HepG2 (cell line): ENCODE measurements at regions of chr17 and their contacts with region 1.

Region 1: DNA sequence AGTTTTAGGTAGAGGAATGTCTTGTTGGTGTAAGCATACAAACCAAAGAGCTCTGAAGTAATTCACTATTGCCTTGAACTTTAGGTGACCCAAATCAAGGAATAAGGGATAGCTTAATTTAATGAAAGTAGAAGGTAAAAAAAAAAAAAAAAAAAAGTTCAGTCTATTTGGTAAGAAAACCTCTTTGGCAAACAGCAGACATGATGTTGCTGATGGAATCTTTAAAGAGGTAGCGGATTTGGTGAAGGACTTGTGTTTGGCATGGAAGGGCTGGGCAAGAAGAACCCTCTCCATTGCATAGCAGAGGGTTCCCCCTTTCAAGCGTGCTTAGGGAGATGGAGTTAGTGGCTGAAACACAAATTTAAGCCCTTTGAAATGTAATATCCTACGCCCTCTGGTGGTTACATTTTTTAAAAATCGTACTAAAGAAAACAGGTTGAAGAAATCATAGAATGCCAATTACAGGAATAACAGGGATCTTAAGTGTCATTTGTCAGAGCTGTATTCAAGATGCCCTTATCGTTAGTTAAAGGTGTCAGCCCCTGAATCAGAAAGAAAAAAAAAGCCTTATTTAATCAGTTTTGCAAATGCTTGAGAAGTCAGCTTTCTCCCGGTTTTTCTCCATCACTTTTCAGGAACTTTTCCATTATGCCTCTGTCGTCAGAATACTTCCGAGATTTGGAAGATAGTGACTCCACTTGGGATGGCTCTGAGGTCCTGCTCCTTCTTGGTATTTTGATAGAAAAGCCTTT is 383.1 kb downstream of the KCNJ2 start:
- DNase-seq: peak; percentile 15
- ATAC-seq: peak; percentile 41; the same call in 1 of the 3 replicates
- H3K4me3 ChIP-seq: no peak overlapping the region
- H3K27ac ChIP-seq: no peak overlapping the region
- H3K4me1 ChIP-seq: no peaks in the 10 kb centered on the region
- H3K27me3 ChIP-seq: no peaks in the 10 kb centered on the region
- CTCF ChIP-seq: peak; percentile 56
- EP300 ChIP-seq: no peak
- POLR2A ChIP-seq: no peak
- RAD21 ChIP-seq: no peak; the same call in 1 of the 2 replicates

Region 2: DNA sequence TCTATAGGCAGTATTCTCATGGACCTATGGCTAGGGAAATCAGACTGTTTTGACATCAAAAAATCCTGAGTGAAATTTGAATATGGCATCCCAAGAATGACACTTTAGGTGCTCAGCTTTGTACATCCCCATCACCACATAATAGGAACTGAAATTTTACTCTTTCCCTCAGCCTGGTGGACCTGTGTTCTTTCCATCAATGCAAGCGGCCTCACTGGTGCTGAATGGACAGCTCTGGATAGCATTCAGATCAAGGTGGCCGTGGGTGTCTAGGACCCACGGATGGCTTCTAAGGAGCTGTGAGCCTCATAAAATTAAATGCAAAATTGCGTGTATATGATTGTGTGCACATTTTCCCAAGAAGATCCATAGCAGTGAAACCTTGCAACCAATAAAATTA is 985.3 kb before region 1 on chr17:
- CTCF ChIA-PET with region 1: interaction called, 14 read pairs
- POLR2A ChIA-PET with region 1: no interaction called
- in situ Hi-C with region 1: loop called (anchors 10 kb)
- intact Hi-C with region 1: loop called (anchors 5 kb)
- DNase-seq: no peak
- ATAC-seq: no peak
- H3K4me3 ChIP-seq: no peak overlapping the region
- H3K27ac ChIP-seq: no peak overlapping the region
- H3K4me1 ChIP-seq: no peaks in the 10 kb centered on the region
- H3K27me3 ChIP-seq: no peaks in the 10 kb centered on the region
- CTCF ChIP-seq: no peak
- EP300 ChIP-seq: no peak
- POLR2A ChIP-seq: no peak
- RAD21 ChIP-seq: no peak

Region 3: GRCh38 chr17:69575346-69575761 is 977.1 kb before region 1 on chr17:
- CTCF ChIA-PET with region 1: interaction called, 14 read pairs
- POLR2A ChIA-PET with region 1: no interaction called
- in situ Hi-C with region 1: loop called (anchors 10 kb)
- intact Hi-C with region 1: no loop called
- DNase-seq: no peak
- ATAC-seq: no peak
- H3K4me3 ChIP-seq: no peak overlapping the region
- H3K27ac ChIP-seq: no peak overlapping the region
- H3K4me1 ChIP-seq: no peaks in the 10 kb centered on the region
- H3K27me3 ChIP-seq: peaks cover 0 to 2% of the 10 kb centered on the region in 2 experiments; a peak in 2 of 5 replicates
- CTCF ChIP-seq: no peak
- EP300 ChIP-seq: no peak
- POLR2A ChIP-seq: no peak
- RAD21 ChIP-seq: no peak